ENCODE measurements at regions of chr12 and their contacts with region 1.

Region 1: DNA sequence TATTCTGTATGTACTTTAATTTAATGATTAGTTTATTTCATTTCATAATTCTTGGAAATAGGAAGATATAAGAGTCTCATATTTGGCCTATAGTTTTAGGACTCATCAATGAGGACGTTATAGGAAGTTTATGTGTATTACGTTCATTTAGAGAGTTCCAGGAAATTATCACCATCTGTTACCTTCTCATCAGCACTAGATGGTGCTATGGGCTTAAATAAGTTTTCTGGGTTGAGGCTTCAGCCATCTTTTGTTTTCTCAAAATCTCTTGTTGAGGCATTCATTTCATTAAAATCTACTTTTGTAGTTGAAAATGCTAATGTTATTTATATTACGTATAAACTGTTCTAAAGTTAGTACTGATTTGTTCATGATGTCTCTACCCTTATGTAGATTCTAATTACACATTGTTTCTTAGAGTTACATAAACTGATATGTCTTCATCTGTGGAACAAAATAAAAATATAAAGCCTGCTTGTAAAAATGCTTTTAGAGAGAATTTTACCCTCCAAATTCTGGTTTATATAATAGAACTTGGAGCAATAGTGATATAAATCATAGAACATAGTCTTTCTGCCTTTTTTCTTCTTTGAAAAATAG is 89.2 kb downstream of the CFAP54 start:
- DNase-seq: no peak
- H3K4me3 Mint-ChIP-seq: no peak overlapping the region
- H3K27ac Mint-ChIP-seq: no peak overlapping the region
- H3K4me1 Mint-ChIP-seq: no peaks in the 10 kb centered on the region
- H3K27me3 Mint-ChIP-seq: peaks cover 5% of the 10 kb centered on the region

Region 2: DNA sequence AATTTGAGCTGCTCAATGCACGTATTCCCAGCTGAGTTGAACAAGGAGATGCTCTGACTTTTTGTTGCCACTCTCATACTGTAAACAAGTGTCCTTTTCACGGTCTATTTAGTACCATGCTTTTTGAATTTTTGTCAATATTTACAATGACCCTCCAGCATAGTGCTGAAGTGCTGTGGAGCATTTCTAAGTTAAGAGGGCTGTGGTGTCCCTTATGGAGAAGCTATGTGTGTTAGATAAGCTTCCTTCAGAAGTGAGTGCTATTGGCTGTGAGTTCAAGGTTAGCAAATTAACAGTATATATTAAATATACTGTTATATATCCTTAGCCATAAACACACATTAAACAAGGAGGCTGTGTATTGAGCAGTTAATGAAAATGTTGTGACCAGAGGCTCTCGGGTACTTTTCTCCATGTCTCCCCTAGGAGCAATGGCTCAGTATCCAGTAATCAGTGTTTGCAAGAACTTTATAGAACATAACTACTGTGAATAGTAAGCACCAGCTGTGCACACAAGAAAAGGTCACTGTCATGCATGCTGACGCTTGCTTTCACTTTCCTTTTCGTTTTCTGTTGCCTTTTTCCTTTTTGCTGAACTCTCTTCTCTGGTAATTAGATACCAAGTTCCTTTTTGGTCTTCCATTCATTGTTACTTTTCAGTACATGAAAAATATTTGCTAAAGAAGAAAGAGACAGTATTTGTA is 141.2 kb after region 1 on chr12:
- intact Hi-C with region 1: loop called (anchors 2 kb)
- DNase-seq: peak; percentile 11
- H3K4me3 Mint-ChIP-seq: peak overlapping the region; percentile 87
- H3K27ac Mint-ChIP-seq: peak overlapping the region; percentile 80
- H3K4me1 Mint-ChIP-seq: peaks cover 18% of the 10 kb centered on the region
- H3K27me3 Mint-ChIP-seq: no peaks in the 10 kb centered on the region

Region 3: DNA sequence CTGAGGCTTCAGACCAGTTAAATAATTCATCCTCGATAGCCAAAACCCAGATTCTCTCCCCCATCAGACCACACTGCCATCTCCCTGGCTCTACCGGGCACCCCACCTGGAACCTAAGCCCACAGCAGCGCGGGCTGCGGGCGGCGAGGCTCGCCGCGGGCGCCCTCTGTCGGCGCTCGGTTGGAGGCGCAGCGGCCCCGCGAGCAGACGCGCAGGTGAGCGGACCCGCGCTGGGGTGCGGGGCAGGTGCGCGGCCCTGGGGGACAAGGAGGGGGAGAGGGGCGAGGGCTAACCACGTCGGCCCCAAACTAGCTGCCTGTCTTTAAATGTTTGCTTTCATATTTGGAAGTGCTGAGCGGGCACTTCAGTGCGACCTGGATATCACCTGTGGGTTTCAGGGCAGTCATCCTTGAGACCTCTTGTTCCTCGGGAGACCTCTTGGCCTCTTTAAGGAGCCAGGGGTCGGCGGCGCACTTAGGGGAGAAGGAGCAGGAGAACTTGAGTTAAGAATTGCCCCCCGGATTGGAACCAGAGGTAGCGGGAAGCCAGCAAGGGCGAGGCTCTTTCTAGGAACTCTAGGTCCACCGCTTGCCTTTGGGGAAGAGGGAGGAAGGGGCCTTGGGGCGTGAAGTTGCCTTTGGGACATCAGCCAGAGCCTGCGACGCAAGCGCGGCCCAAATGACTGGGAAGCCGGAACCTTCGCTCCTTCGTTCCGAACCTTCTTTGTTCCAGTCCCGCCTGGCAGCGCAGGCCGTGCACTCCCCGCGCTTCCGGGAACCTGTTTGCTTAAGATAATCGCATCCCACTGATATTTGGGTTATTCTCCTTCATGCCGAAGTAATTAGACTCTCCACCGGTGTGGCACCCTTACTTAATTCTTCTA is 407.1 kb after region 1 on chr12:
- intact Hi-C with region 1: loop called (anchors 1 kb)
- DNase-seq: peak; percentile 20
- H3K4me3 Mint-ChIP-seq: peak overlapping the region; percentile 60
- H3K27ac Mint-ChIP-seq: no peak overlapping the region
- H3K4me1 Mint-ChIP-seq: no peaks in the 10 kb centered on the region
- H3K27me3 Mint-ChIP-seq: peaks cover 40% of the 10 kb centered on the region

Region 4: GRCh38 chr12:97216848-97217247 is 638.2 kb after region 1 on chr12:
- intact Hi-C with region 1: loop called (anchors 2 kb)
- DNase-seq: no peak
- H3K4me3 Mint-ChIP-seq: no peak overlapping the region
- H3K27ac Mint-ChIP-seq: no peak overlapping the region
- H3K4me1 Mint-ChIP-seq: no peaks in the 10 kb centered on the region
- H3K27me3 Mint-ChIP-seq: no peaks in the 10 kb centered on the region

Region 5: DNA sequence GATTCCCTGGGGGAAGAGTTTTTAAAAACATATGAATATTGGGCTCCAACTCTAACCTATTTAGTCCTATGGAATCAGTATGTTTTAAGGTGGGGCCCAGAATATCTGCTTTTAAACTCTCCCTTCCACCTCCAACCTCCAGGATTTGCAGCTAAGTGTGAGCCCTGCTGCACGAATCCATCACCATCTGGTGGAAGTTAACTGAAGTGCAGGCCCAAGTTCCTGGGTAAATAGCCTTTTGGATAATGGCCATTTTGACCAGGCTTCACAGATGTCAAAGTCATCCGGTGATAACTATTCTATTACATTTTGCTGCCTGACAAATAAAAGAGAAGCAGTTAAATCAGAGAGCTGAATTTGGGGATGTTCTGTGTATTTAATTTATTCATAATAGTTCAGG is 825.9 kb after region 1 on chr12:
- intact Hi-C with region 1: loop called (anchors 1 kb)
- DNase-seq: no peak
- H3K4me3 Mint-ChIP-seq: no peak overlapping the region
- H3K27ac Mint-ChIP-seq: no peak overlapping the region
- H3K4me1 Mint-ChIP-seq: no peaks in the 10 kb centered on the region
- H3K27me3 Mint-ChIP-seq: no peaks in the 10 kb centered on the region

Region 6: DNA sequence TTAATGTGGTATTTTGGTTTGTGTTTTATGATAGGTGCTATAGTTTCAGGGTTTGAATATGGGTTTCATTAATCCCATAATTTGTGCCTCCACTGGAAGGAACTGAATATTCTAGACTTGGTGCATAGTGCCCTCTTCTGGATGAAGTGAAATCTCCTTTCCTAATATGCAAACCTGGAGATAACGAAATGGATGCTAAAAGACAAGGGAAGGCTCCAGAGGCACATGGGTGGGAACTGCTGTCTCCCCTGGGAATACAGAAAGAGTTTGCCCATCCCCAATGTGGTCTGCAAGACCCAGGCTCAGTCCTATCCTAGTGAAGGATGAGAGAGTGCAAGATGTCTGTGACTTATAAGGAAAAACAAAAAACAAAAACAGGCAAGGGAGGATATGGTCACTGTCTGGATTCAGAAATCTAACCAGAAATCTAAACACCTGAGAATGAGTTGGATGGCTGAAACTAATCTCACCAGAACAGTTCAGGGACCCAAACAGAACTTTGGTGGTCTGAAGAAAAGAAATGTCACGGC is 1794.5 kb after region 1 on chr12:
- intact Hi-C with region 1: loop called (anchors 1 kb)
- DNase-seq: no peak
- H3K4me3 Mint-ChIP-seq: no peak overlapping the region
- H3K27ac Mint-ChIP-seq: no peak overlapping the region
- H3K4me1 Mint-ChIP-seq: peaks cover 32% of the 10 kb centered on the region
- H3K27me3 Mint-ChIP-seq: peaks cover 21% of the 10 kb centered on the region

Measured in activated T-helper 1 cell treated with anti-CD3 and anti-CD28 coated beads, Interleukin-12 subunit alpha, Interleukin-12 subunit beta, Interleukin-2, Interleukin-4 antibody, amounts not matched to agents 30 ng/mL and 10 ng/mL and 1 ng/mL, durations not matched to agents 14 hours and 24 hours and 36 hours (primary cell).